ENCODE measurements at regions of chr10 and their contacts with region 1.

Region 1: DNA sequence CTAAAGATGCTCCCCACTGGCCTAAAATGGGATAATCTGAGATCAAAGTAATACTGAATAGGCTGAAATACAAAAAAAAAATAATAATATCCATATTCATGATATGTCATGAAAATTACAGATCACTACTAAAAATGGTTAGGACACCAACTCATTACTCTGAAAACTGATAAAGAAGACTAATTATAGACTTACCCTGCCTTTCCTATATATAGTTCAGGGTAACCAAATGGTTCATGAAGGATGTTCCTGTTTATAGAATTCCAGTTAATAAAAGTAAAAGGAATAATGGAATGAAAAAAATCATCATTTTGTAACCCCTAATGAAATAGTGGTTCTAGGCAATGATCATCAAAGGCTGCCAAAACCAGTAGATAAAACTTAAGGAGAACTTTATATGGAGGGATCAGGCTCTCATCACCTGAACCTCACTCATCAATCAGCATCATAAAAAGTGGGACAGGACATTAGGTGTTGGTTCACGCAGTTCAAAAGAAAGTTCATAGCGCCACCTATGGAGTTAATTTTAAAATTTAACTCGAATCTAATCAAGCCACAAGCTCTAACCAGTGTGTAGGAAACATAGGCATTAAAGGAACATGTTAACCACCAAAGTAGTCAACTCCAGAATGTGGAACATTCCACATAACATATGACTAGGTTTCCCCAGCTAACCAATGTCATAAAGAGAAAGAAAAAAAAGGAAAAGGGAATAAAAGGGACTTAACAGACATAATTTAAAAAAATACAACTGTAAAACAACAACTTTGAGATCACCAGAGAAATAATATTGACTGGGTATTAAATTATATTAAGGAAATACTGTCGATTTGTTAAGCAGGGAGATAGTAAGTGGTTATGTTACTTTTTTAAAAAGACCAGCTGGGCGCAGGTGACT is 35.7 kb downstream of the P4HA1 start:
- DNase-seq: peak in 1 of 2 experiments; percentile 60
- H3K4me3 ChIP-seq: no peak overlapping the region
- H3K4me3 Mint-ChIP-seq: no peak overlapping the region
- H3K27ac Mint-ChIP-seq: no peak overlapping the region
- H3K4me1 ChIP-seq: no peaks in the 10 kb centered on the region
- H3K4me1 Mint-ChIP-seq: no peaks in the 10 kb centered on the region
- H3K27me3 ChIP-seq: no peaks in the 10 kb centered on the region
- H3K27me3 Mint-ChIP-seq: no peaks in the 10 kb centered on the region
- CTCF ChIP-seq: peak; percentile 38 to 71

Region 2: DNA sequence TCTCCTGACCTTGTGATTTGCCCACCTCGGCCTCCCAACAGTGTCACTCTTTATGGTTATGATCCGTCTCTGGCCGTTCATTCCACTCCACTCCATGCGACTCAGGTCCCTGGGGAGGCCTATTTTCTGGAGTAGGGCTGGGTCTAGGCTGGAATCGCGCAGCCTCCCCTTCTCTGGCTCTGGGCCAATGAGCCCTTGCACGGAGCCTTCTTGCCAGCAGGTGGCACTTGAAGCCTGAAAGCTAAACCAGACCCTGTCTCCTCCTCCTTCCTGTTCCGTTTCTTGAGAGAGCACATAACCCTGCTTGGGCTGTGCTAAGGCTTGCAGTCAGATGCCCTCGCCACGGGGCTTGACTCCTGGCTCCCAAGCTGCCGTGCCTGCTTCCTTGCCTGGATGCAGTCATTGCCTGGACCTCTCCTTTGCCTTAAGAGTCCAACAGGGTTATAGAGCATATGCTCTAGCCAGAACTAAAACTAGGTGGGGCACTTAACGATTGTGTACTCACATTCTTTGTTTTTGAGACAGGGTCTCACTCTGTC is 696.7 kb before region 1 on chr10:
- CTCF ChIA-PET with region 1: no interaction called
- POLR2A ChIA-PET with region 1: no interaction called
- intact Hi-C with region 1: loop called (anchors 2 kb)
- DNase-seq: peak; percentile 90 to 92
- H3K4me3 ChIP-seq: no peak overlapping the region
- H3K4me3 Mint-ChIP-seq: peak overlapping the region; percentile 23
- H3K27ac Mint-ChIP-seq: peak overlapping the region; percentile 75
- H3K4me1 ChIP-seq: peaks cover 17% of the 10 kb centered on the region
- H3K4me1 Mint-ChIP-seq: peaks cover 9% of the 10 kb centered on the region
- H3K27me3 ChIP-seq: no peaks in the 10 kb centered on the region
- H3K27me3 Mint-ChIP-seq: no peaks in the 10 kb centered on the region
- CTCF ChIP-seq: peak; percentile 98 to 99

Region 3: DNA sequence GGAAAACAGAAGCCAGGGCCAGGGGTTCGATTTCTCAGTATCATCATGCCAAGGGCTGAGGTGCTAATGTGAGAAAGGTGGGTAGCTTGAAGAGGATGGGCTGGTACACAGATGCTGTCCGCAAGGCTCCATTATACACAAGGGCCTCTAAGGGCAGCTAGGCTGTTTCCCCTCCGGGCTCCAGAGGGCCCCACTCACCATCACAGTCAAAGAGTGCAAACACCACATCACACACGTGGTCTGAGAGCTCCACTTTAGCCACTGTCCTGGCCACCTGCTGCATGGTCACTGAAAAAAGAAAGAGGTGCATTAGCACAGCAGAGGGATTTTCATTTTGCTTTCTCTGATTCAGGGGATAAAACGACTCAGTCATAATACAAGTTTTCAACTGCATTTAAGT is 685.4 kb before region 1 on chr10:
- CTCF ChIA-PET with region 1: interaction called, 5 read pairs
- POLR2A ChIA-PET with region 1: no interaction called
- intact Hi-C with region 1: loop called (anchors 5 kb)
- DNase-seq: peak in 1 of 2 experiments; percentile 60
- H3K4me3 ChIP-seq: no peak overlapping the region
- H3K4me3 Mint-ChIP-seq: no peak overlapping the region
- H3K27ac Mint-ChIP-seq: no peak overlapping the region
- H3K4me1 ChIP-seq: no peaks in the 10 kb centered on the region
- H3K4me1 Mint-ChIP-seq: no peaks in the 10 kb centered on the region
- H3K27me3 ChIP-seq: no peaks in the 10 kb centered on the region
- H3K27me3 Mint-ChIP-seq: no peaks in the 10 kb centered on the region
- CTCF ChIP-seq: peak; percentile 22 to 62

Region 4: GRCh38 chr10:72834183-72834825 is 226.7 kb before region 1 on chr10:
- CTCF ChIA-PET with region 1: interaction called, 5 read pairs
- POLR2A ChIA-PET with region 1: no interaction called
- intact Hi-C with region 1: loop called (anchors 1 kb)
- DNase-seq: peak; percentile 53 to 72
- H3K4me3 ChIP-seq: no peak overlapping the region
- H3K4me3 Mint-ChIP-seq: no peak overlapping the region
- H3K27ac Mint-ChIP-seq: no peak overlapping the region
- H3K4me1 ChIP-seq: no peaks in the 10 kb centered on the region
- H3K4me1 Mint-ChIP-seq: peaks cover 13% of the 10 kb centered on the region
- H3K27me3 ChIP-seq: no peaks in the 10 kb centered on the region
- H3K27me3 Mint-ChIP-seq: no peaks in the 10 kb centered on the region
- CTCF ChIP-seq: peak; percentile 73 to 81

Region 5: DNA sequence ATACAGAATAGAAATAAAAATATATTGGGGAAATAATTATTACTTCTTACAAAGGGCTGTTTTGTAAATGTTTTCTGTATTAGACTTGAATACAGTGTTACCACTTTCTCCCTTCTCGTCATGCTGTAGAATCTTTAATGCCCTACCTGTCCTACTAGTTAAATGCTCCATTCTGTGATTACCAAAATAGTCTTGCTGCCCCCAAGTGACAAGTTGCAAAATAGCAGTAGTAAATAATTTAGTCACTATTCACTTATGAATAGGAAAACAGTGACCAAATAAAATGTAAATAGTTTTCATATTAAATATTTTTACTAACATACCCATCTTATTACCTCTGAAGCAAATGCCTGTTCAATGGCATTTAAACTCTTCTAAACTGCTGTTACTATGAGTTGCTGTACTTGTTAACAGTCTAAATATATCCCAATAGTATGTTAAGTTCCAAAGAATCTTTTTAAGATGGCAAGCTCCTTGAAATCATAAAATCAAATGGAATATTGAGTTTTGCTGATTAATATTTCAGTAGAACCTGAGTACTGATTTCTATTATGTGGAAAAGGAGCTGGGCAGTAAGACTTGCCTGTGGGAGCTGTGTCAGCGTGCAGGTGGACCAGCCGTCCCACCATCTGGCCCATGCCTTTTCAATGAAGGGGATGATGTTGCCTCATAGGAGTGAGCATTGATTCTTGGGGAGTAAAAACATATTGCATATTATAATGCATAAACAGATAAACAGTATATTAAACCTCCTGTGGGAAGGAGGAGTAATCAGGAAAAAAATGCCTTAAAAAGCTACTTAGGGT is 185.5 kb before region 1 on chr10:
- CTCF ChIA-PET with region 1: no interaction called
- POLR2A ChIA-PET with region 1: no interaction called
- intact Hi-C with region 1: loop called (anchors 1 kb)
- DNase-seq: peak in 1 of 2 experiments; percentile 56
- H3K4me3 ChIP-seq: no peak overlapping the region
- H3K4me3 Mint-ChIP-seq: no peak overlapping the region
- H3K27ac Mint-ChIP-seq: no peak overlapping the region
- H3K4me1 ChIP-seq: no peaks in the 10 kb centered on the region
- H3K4me1 Mint-ChIP-seq: no peaks in the 10 kb centered on the region
- H3K27me3 ChIP-seq: no peaks in the 10 kb centered on the region
- H3K27me3 Mint-ChIP-seq: no peaks in the 10 kb centered on the region
- CTCF ChIP-seq: peak; percentile 67 to 69

Region 6: DNA sequence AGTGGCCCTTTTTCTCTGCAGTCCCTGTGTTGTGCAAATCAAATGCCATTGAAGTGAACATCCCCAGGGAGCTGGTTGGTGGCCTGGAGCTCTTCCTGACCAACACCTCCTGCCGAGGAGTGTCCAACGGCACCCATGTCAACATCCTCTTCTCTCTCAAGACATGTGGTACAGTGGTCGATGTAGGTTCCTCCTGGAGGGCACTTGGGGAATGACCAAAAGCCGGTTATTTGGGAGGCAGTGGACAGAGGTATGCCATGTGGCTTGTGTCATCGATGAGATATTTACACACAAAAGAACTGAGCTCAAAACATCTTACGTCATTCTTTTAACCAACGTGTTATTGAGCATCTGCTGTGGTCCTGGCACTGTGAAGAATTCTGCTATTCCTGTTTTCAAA is 147.7 kb before region 1 on chr10:
- CTCF ChIA-PET with region 1: no interaction called
- POLR2A ChIA-PET with region 1: no interaction called
- intact Hi-C with region 1: loop called (anchors 10 kb)
- DNase-seq: peak in 1 of 2 experiments; percentile 16
- H3K4me3 ChIP-seq: no peak overlapping the region
- H3K4me3 Mint-ChIP-seq: no peak overlapping the region
- H3K27ac Mint-ChIP-seq: no peak overlapping the region
- H3K4me1 ChIP-seq: no peaks in the 10 kb centered on the region
- H3K4me1 Mint-ChIP-seq: peaks cover 7% of the 10 kb centered on the region
- H3K27me3 ChIP-seq: no peaks in the 10 kb centered on the region
- H3K27me3 Mint-ChIP-seq: no peaks in the 10 kb centered on the region
- CTCF ChIP-seq: no peak

Region 7: GRCh38 chr10:73083221-73083620 is 22.2 kb after region 1 on chr10:
- CTCF ChIA-PET with region 1: no interaction called
- POLR2A ChIA-PET with region 1: no interaction called
- intact Hi-C with region 1: no loop called
- DNase-seq: no peak
- H3K4me3 ChIP-seq: no peak overlapping the region
- H3K4me3 Mint-ChIP-seq: no peak overlapping the region
- H3K27ac Mint-ChIP-seq: no peak overlapping the region
- H3K4me1 ChIP-seq: no peaks in the 10 kb centered on the region
- H3K4me1 Mint-ChIP-seq: no peaks in the 10 kb centered on the region
- H3K27me3 ChIP-seq: no peaks in the 10 kb centered on the region
- H3K27me3 Mint-ChIP-seq: no peaks in the 10 kb centered on the region
- CTCF ChIP-seq: no peak

Region 8: GRCh38 chr10:73139251-73139650 is 78.3 kb after region 1 on chr10:
- CTCF ChIA-PET with region 1: no interaction called
- POLR2A ChIA-PET with region 1: no interaction called
- intact Hi-C with region 1: no loop called
- DNase-seq: no peak
- H3K4me3 ChIP-seq: no peak overlapping the region
- H3K4me3 Mint-ChIP-seq: no peak overlapping the region
- H3K27ac Mint-ChIP-seq: no peak overlapping the region
- H3K4me1 ChIP-seq: peaks cover 6% of the 10 kb centered on the region
- H3K4me1 Mint-ChIP-seq: peaks cover 11% of the 10 kb centered on the region
- H3K27me3 ChIP-seq: no peaks in the 10 kb centered on the region
- H3K27me3 Mint-ChIP-seq: no peaks in the 10 kb centered on the region
- CTCF ChIP-seq: no peak

Region 9: DNA sequence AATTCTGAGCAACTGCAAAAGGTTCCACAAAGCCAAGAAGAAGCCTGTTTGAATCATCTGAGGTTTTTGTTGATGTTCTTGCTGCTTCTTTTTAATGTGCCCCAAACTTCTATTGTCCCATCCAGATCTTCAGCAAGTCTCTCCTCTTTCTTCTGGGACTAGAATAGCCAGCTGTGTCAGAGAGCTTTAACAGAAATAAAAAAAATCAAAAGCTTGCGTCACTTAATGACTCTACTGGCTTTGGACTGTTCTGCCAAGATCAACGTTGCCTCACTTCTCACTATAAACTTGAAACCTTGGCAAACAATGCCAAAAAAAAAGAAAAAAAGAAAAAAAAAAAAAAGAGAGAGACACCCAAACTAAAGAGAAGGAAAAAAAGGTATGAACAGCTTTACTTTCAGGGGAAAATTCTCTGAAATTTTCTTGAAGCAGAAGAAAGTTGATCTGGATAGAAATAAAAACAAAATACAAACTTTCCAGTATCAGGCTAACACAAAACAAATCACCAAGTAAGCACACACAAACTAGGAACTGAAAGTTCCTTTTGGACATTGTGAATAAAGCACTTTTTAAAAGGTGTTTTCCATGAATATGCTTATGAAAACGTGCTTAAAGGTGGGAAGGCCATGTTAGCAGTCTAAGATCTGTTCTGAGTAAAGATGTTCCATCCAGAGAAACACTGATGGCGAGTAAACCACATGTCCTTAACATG is 515.3 kb after region 1 on chr10:
- CTCF ChIA-PET with region 1: no interaction called
- POLR2A ChIA-PET with region 1: no interaction called
- intact Hi-C with region 1: no loop called
- DNase-seq: peak in 1 of 2 experiments; percentile 33
- H3K4me3 ChIP-seq: no peak overlapping the region
- H3K4me3 Mint-ChIP-seq: no peak overlapping the region
- H3K27ac Mint-ChIP-seq: no peak overlapping the region
- H3K4me1 ChIP-seq: peaks cover 23% of the 10 kb centered on the region
- H3K4me1 Mint-ChIP-seq: peaks cover 23% of the 10 kb centered on the region
- H3K27me3 ChIP-seq: no peaks in the 10 kb centered on the region
- H3K27me3 Mint-ChIP-seq: no peaks in the 10 kb centered on the region
- CTCF ChIP-seq: no peak

Measured in Caco-2 (cell line).